ENCODE measurements at regions of chr12 and their contacts with region 1.

Region 1: GRCh38 chr12:34016361-34016760 is 5.9 kb upstream of the ALG10 start:
- ATAC-seq: peak in 1 of 8 experiments; percentile 47
- H3K4me3 ChIP-seq: no peak overlapping the region
- H3K27ac ChIP-seq: no peak overlapping the region
- H3K4me1 ChIP-seq: peaks cover 0 to 2% of the 10 kb centered on the region in 2 donors

Region 2: GRCh38 chr12:32761716-32762115 is 1254.6 kb before region 1 on chr12:
- in situ Hi-C with region 1: loop called in 7 of 9 experiments (anchors 10 to 25 kb)
- ATAC-seq: no peak
- H3K4me3 ChIP-seq: no peak overlapping the region
- H3K27ac ChIP-seq: no peak overlapping the region
- H3K4me1 ChIP-seq: peaks cover under 1 to 1% of the 10 kb centered on the region in 2 donors

Region 3: DNA sequence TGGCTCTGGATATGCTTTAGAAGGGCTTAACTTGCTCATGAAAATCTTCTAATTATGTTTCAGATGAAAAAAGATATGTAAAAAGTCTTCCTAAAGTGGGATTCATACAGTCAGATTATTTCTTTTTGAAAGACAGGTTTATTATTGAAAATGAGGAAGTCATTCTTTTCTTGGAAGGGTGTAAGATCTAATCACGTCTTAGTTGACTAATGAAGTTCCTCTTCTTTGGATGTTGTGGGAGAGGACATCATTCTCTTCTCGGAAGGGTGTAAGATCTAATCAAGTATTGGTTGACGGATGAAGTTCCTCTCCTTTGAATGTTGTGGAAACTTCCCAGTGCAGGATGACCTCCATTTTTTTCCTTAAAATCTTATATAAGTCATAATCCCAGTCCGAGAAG is 80.9 kb after region 1 on chr12:
- in situ Hi-C with region 1: no loop called
- ATAC-seq: no peak
- H3K4me3 ChIP-seq: no peak overlapping the region
- H3K27ac ChIP-seq: no peak overlapping the region
- H3K4me1 ChIP-seq: no peaks in the 10 kb centered on the region

Measured in motor neuron (in vitro differentiated cells).